Mammary epithelial cell (primary cell): ENCODE measurements at regions of chr11 and their contacts with region 1.

Region 1: GRCh38 chr11:75966546-75967287 is 151.7 kb downstream of the UVRAG start:
- DNase-seq: peak; percentile 65
- H3K4me3 ChIP-seq: peak overlapping the region in 1 of 3 experiments; percentile 27
- H3K27ac ChIP-seq: peak overlapping the region; percentile 70
- H3K4me1 ChIP-seq: peaks cover 19% of the 10 kb centered on the region
- H3K27me3 ChIP-seq: no peaks in the 10 kb centered on the region
- CTCF ChIP-seq: no peak

Region 2: GRCh38 chr11:75525596-75526541 is 440.8 kb before region 1 on chr11 and contains the start of gene GDPD5:
- CTCF ChIA-PET with region 1: no interaction called
- dilution Hi-C with region 1: no loop called
- in situ Hi-C with region 1: no loop called
- intact Hi-C with region 1: no loop called
- DNase-seq: peak; percentile 77
- H3K4me3 ChIP-seq: peak within 1 kb of the TSS; percentile 75 to 79 (median 77)
- H3K27ac ChIP-seq: no peak within 1 kb of the TSS
- H3K4me1 ChIP-seq: peaks cover 10% of the 10 kb centered on the region
- H3K27me3 ChIP-seq: no peaks in the 10 kb centered on the region
- CTCF ChIP-seq: peak in 1 of 2 donors; percentile 59
- total RNA-seq, gene GDPD5: 9.5 to 13.3 TPM

Region 3: DNA sequence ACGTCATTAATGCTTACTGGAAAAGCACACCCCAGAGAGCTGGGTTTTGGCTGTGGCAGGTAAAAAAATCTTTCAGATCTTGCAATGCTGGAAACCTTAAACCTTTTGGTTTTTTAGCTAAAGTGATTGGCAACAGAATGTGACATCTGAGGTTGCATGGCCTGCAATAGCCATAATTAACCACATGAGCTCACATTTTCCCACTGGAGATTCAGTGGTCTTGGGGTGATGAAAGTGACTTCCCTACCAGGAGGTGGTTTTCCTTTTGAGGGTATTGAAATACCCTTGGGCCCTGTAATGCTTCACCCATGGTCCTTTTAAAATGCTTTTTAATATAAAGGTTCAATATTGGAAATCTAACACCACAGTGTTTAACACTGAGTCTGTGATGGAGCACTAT is 46.8 kb after region 1 on chr11:
- CTCF ChIA-PET with region 1: no interaction called
- dilution Hi-C with region 1: loop called (anchors 5 kb)
- in situ Hi-C with region 1: no loop called
- intact Hi-C with region 1: no loop called
- DNase-seq: no peak
- H3K4me3 ChIP-seq: no peak overlapping the region
- H3K27ac ChIP-seq: no peak overlapping the region
- H3K4me1 ChIP-seq: no peaks in the 10 kb centered on the region
- H3K27me3 ChIP-seq: no peaks in the 10 kb centered on the region
- CTCF ChIP-seq: no peak

Region 4: DNA sequence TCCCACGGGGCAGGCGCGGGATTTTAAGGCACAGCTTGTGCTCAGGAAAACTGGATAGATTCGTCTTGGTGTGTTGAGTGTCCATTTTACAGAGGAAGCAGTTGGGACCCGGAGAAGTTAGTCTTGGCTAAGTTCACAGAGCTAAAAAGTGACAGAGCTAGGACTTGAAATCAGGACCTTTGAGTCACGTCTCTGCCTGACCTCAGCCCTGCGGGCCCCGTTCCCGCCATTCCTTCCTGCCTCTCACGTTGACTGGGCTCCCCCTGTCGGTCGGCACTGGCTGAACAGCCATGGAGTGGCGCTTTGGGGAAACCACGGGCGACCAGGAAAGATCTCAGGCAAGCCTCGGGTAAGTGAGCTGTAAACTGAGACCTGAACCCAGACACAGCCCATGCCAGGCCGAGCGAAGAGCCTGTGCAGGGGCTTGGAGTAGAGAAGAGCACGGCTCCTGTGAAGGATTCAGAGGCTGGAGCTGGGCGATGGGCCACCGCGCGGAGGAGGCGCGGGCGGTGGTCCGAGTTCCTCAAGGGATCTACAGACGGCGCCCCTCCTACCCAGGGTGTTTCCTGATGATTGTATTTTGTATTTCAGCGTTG is 185.5 kb after region 1 on chr11:
- CTCF ChIA-PET with region 1: no interaction called
- dilution Hi-C with region 1: no loop called
- in situ Hi-C with region 1: no loop called
- intact Hi-C with region 1: no loop called
- DNase-seq: peak; percentile 66
- H3K4me3 ChIP-seq: peak overlapping the region in 2 of 3 experiments; percentile 35 to 40
- H3K27ac ChIP-seq: no peak overlapping the region
- H3K4me1 ChIP-seq: peaks cover 3% of the 10 kb centered on the region
- H3K27me3 ChIP-seq: no peaks in the 10 kb centered on the region
- CTCF ChIP-seq: peak; percentile 93 to 95